K562 (cell line): ENCODE measurements at regions of chrX and their contacts with region 1.

Region 1: DNA sequence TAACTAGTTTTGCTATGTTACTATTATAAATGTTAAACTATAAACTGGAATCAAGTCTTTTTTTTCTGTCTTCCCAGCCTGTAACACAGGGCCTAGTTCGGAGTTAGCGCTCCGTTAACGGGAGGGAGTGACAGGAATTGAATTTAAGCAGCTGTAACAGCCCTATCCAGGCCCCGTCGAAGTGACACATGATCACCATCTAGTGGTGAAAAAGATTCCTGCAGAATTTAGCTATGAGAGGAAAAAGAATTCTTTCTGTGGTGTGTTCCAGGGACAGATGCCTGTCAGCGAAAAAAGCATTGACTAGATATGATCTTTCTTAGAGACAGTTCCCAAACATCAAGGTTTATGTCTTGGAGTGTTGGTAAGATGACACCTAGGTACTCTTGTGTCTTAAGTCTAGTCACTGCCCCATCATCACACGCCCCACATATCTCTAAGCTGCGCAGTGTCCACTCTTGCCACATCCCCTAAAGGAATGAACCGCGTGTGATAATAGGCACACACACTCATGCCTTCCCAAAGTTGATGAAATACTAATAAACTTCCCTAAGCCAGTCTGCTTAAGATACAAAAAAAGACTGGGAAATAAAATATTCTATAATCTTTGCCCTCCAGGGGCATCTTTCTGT is 2.0 kb downstream of the GAB3 start:
- DNase-seq: peak; percentile 61 to 85 (median 68)
- ATAC-seq: peak; percentile 74
- H3K4me3 ChIP-seq: peak overlapping the region; percentile 69; the same call in 1 of the 2 replicates
- H3K27ac ChIP-seq: peak overlapping the region; percentile 34
- H3K4me1 ChIP-seq: peaks cover 20 to 29% of the 10 kb centered on the region in 2 experiments; a peak in 3 of 5 replicates
- H3K27me3 ChIP-seq: no peaks in the 10 kb centered on the region
- CTCF ChIP-seq: peak; percentile 68 to 84 (median 81)
- EP300 ChIP-seq: no peak
- POLR2A ChIP-seq: no peak
- RAD21 ChIP-seq: peak; percentile 77 to 87

Region 2: GRCh38 chrX:154596290-154596929 is 152.4 kb before region 1 on chrX:
- CTCF ChIA-PET with region 1: no interaction called
- POLR2A ChIA-PET with region 1: no interaction called
- in situ Hi-C with region 1: loop called (anchors 25 kb)
- intact Hi-C with region 1: no loop called
- DNase-seq: no peak
- ATAC-seq: no peak
- H3K4me3 ChIP-seq: no peak overlapping the region
- H3K27ac ChIP-seq: no peak overlapping the region
- H3K4me1 ChIP-seq: peaks cover 0 to 9% of the 10 kb centered on the region in 2 experiments; a peak in 2 of 5 replicates
- H3K27me3 ChIP-seq: peaks cover 0 to 34% of the 10 kb centered on the region in 2 experiments; a peak in 2 of 5 replicates
- CTCF ChIP-seq: no peak
- EP300 ChIP-seq: no peak
- POLR2A ChIP-seq: no peak
- RAD21 ChIP-seq: no peak

Region 3: DNA sequence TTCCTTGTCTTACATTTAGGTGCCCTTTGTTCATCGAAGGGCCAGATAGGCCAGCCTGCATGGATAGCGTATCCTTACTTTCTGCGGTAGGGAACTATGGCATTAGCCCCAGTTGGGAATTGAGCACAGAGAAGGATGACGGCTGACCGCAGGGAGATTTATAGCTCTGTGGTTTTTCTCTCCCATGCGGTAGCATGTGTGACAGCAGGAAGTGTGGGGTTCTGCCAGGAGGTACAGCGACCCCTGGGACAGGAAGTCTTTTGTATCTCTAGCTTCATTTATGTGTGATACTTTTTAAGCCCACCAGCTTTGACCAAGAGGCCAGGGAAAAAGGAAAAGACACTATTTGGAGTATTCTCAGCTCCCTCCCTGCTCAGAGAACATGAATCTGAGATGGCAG is 31.0 kb before region 1 on chrX:
- CTCF ChIA-PET with region 1: interaction called, 4 read pairs
- POLR2A ChIA-PET with region 1: interaction called, 3 read pairs
- in situ Hi-C with region 1: no loop called
- intact Hi-C with region 1: loop called (anchors 2 kb)
- DNase-seq: peak; percentile 51 to 89 (median 68)
- ATAC-seq: peak; percentile 92
- H3K4me3 ChIP-seq: no peak overlapping the region
- H3K27ac ChIP-seq: peak overlapping the region; percentile 89
- H3K4me1 ChIP-seq: peaks cover 20 to 28% of the 10 kb centered on the region in 2 experiments
- H3K27me3 ChIP-seq: no peaks in the 10 kb centered on the region
- CTCF ChIP-seq: peak; percentile 57 to 65 (median 61)
- EP300 ChIP-seq: peak; percentile 60
- POLR2A ChIP-seq: no peak
- RAD21 ChIP-seq: no peak